ENCODE measurements at regions of chr6 and their contacts with region 1.

Region 1: GRCh38 chr6:8707956-8708772 is 272.8 kb upstream of the SLC35B3 start:
- DNase-seq: peak; percentile 91

Region 2: GRCh38 chr6:8420031-8420588 is 288.1 kb before region 1 on chr6:
- in situ Hi-C with region 1: no loop called
- DNase-seq: no peak

Region 3: DNA sequence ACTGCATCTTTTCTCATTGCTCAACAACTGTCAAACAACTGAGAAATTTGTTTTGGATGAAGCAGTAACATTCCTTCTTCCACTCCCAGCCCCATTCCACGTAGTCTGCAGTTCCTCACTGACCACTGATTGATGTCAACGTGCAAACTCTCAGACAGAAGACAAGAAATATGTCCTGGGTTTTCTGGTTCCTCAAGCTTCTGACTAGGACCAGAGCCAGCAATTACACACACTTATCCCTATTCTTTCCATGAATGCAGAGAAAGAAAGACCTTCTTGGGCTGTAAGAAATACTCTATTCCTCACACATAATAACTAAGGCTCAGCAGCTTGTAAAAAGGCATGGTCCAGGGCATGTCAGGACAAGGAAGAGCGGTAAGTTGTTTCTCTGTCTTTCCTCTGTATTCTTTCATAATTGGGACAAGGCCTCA is 517.3 kb after region 1 on chr6:
- in situ Hi-C with region 1: loop called (anchors 25 kb)
- DNase-seq: no peak

Measured in SK-MEL-5 (cell line).